HEK293 (cell line): ENCODE measurements at regions of chr19 and their contacts with region 1.

Region 1: GRCh38 chr19:4471403-4472173 is 509 bp upstream of the HDGFL2 start:
- H3K4me3 ChIP-seq: peak overlapping the region; percentile 66
- H3K27ac ChIP-seq: peak overlapping the region; percentile 54
- H3K4me1 ChIP-seq: peaks cover 3% of the 10 kb centered on the region; the same call in 1 of the 2 replicates
- CTCF ChIP-seq: no peak

Region 2: GRCh38 chr19:4457654-4458395 is 13.8 kb before region 1 on chr19 and contains the start of gene UBXN6:
- CTCF ChIA-PET with region 1: interaction called, 7 read pairs
- POLR2A ChIA-PET with region 1: interaction called, 23 read pairs
- H3K4me3 ChIP-seq: peak within 1 kb of the TSS; percentile 82
- H3K27ac ChIP-seq: peak within 1 kb of the TSS; percentile 67
- H3K4me1 ChIP-seq: peaks cover 7% of the 10 kb centered on the region
- CTCF ChIP-seq: no peak